ENCODE measurements at regions of chr19 and their contacts with region 1.

Region 1: GRCh38 chr19:7852851-7853769 is 21.1 kb downstream of the PRR36 start:
- DNase-seq: peak; percentile 38 to 76 (median 51)
- ATAC-seq: peak; percentile 87
- H3K4me3 ChIP-seq: no peak overlapping the region
- H3K4me3 Mint-ChIP-seq: peak overlapping the region in 1 of 10 donors; percentile 33
- H3K27ac ChIP-seq: no peak overlapping the region
- H3K27ac Mint-ChIP-seq: peak overlapping the region in 1 of 9 donors; percentile 52
- H3K4me1 ChIP-seq: peaks cover 3 to 7% of the 10 kb centered on the region in 2 donors
- H3K4me1 Mint-ChIP-seq: peaks cover 0 to 8% (median 5%) of the 10 kb centered on the region in 7 donors
- H3K27me3 ChIP-seq: no peaks in the 10 kb centered on the region
- H3K27me3 Mint-ChIP-seq: no peaks in the 10 kb centered on the region

Region 2: GRCh38 chr19:7652061-7652641 is 201.0 kb before region 1 on chr19:
- CTCF ChIA-PET with region 1: no interaction called
- POLR2A ChIA-PET with region 1: no interaction called
- intact Hi-C with region 1: no loop called
- DNase-seq: peak; percentile 77 to 91 (median 85)
- ATAC-seq: peak; percentile 91
- H3K4me3 ChIP-seq: peak overlapping the region; percentile 49
- H3K4me3 Mint-ChIP-seq: peak overlapping the region; percentile 60 to 86 (median 81)
- H3K27ac ChIP-seq: peak overlapping the region; percentile 37
- H3K27ac Mint-ChIP-seq: peak overlapping the region in 6 of 9 donors; percentile 55 to 85 (median 75)
- H3K4me1 ChIP-seq: peaks cover 0 to 7% of the 10 kb centered on the region in 2 donors
- H3K4me1 Mint-ChIP-seq: peaks cover 5 to 15% (median 11%) of the 10 kb centered on the region in 7 donors
- H3K27me3 ChIP-seq: no peaks in the 10 kb centered on the region
- H3K27me3 Mint-ChIP-seq: peaks cover 0 to 6% (median 0%) of the 10 kb centered on the region in 5 donors

Region 3: DNA sequence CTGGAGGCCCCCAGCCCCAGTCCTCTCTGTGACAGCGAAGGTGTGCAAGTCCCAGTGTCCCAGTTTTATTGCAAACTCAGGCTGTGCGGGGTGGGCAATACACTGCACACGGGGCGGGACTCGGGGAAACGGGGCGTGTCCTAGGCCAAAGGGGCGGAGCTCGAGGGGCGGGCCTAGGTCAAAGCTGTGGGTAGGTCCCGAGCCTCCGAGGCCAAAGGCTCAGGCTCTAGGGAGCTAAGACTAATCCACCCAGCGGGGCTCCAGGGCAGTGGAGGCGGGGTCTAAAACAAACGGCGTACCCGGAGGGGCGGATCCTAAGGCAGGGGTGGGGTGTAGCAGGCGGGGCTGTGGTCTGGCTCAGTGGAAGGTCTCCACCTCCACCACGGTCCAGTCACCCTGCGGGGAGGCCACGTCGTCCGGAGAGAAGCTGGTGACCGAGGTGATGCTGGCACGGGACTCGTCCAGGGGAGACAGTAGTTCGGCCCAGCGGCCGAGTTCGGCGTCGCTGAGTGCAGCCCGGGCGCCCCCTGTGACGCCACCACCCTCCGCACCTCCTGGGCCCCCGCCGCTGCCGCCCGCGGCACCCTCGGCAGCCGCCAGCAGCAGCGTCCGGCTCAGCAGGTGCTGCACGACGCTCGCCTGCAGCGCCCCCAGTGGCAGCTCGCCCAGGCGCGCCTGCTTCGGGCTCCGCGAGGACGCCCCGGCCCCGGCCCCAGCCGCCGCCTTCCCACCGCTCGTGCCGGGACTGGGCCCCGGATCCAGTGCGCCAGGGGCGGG is 15.8 kb after region 1 on chr19:
- CTCF ChIA-PET with region 1: interaction called, 13 read pairs
- POLR2A ChIA-PET with region 1: interaction called, 7 read pairs
- intact Hi-C with region 1: loop called in 1 of 2 experiments (anchors 1 kb)
- DNase-seq: peak in 8 of 9 donors; percentile 51 to 95 (median 89)
- ATAC-seq: peak; percentile 83
- H3K4me3 ChIP-seq: peak overlapping the region; percentile 74
- H3K4me3 Mint-ChIP-seq: peak overlapping the region; percentile 69 to 87 (median 81)
- H3K27ac ChIP-seq: peak overlapping the region; percentile 69
- H3K27ac Mint-ChIP-seq: peak overlapping the region; percentile 34 to 90 (median 58)
- H3K4me1 ChIP-seq: peaks cover 12 to 19% of the 10 kb centered on the region in 2 donors
- H3K4me1 Mint-ChIP-seq: peaks cover 24 to 39% (median 36%) of the 10 kb centered on the region in 7 donors
- H3K27me3 ChIP-seq: peaks cover 0 to 2% of the 10 kb centered on the region in 2 donors
- H3K27me3 Mint-ChIP-seq: peaks cover 0 to 62% (median 8%) of the 10 kb centered on the region in 5 donors

Region 4: GRCh38 chr19:7925171-7925851 is 72.2 kb after region 1 on chr19:
- CTCF ChIA-PET with region 1: interaction called, 3 read pairs
- POLR2A ChIA-PET with region 1: interaction called, 3 read pairs
- intact Hi-C with region 1: loop called (anchors 1 kb)
- DNase-seq: peak; percentile 58 to 83 (median 72)
- ATAC-seq: no peak
- H3K4me3 ChIP-seq: no peak overlapping the region
- H3K4me3 Mint-ChIP-seq: peak overlapping the region; percentile 74 to 88 (median 84)
- H3K27ac ChIP-seq: no peak overlapping the region
- H3K27ac Mint-ChIP-seq: peak overlapping the region in 6 of 9 donors; percentile 52 to 86 (median 76)
- H3K4me1 ChIP-seq: peaks cover 13 to 14% of the 10 kb centered on the region in 2 donors
- H3K4me1 Mint-ChIP-seq: peaks cover 5 to 38% (median 22%) of the 10 kb centered on the region in 7 donors
- H3K27me3 ChIP-seq: no peaks in the 10 kb centered on the region
- H3K27me3 Mint-ChIP-seq: no peaks in the 10 kb centered on the region

Measured in naive thymus-derived CD4-positive, alpha-beta T cell (primary cell).